ENCODE measurements at regions of chr15 and their contacts with region 1.

Region 1: DNA sequence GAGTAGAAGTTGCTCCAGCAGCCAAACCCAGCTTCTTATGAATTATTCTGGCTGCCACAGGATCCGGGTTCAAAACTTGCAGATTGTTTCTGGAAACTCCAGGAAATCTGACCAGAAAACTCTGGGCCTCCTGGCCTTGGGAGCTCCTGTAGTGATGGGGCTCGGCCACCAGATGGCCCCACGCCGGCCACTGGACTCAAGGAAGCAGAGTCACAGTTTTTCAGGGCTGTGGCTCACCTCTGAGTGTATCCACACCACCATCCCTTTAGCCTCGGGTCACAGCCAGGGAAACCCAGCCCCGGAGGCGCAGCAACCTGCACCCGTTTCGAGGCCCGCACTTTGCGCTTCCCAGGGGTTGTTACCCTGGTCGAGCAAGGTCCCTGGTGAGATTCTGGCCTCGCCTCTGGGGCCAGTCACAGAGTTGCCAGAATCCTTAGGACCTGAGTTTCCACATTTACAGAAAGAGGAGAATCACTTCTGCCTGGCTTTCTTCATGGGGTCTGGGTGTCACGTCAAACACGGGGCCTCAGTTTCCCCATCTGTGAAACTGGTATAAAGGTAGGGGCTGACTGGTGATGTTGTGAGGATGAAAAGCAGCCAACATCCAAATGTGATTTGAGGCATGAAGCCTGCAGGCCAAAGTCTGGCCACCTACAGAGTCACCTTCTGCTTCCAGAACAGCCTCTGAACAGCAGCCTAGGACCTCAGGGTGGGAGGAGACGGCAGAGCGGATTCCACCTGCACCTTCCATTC is 53.5 kb upstream of the LCTL start:
- DNase-seq: peak; percentile 43 to 54 (median 51)
- H3K4me3 ChIP-seq: no peak overlapping the region
- H3K27ac ChIP-seq: no peak overlapping the region
- H3K4me1 ChIP-seq: peaks cover 17 to 85% (median 64%) of the 10 kb centered on the region in 4 experiments
- H3K27me3 ChIP-seq: peaks cover 0 to 3% (median 0%) of the 10 kb centered on the region in 5 experiments

Region 2: DNA sequence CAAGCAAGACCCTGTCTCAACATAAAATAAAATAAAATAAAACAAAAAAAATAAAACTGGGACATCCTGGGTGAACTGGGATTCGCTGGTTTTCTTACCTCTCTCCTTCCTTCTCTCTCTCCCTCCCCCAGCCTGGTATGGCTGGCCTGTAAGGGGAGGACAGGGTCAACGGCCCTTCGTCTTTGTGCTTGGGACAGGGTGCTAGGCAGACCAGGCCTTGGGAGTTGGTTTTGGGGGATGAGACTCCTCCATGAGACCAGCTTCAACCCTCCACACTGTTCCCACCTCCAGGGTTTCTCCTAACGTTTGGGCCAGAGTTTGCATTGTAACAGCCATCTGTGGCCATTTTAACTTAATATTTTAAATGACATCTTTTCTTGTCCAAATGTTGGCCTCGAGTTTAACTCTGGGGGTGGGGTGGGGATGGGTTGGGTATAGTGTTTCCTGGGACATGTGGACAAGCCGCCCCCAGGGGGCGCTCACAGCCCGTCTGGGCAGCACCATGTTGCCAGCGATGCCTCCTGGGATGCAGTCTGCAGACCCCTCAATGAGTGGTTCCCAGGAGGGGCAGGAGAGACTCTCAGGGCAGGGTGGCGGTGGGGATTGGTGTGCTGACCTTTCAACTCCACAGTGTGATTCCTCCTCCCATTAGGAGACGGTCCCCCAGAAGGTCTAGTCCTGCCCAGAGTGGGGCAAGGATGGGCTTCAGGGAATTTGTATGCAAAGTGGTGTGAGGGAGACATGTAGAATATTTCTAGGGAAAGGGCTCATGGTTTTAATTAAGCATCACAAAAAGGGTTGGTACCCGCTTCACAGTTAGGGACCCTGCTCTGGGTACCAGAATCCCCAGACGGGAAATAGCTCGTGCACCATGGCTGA is 15.8 kb before region 1 on chr15:
- CTCF ChIA-PET with region 1: interaction called, 21 read pairs
- POLR2A ChIA-PET with region 1: no interaction called
- DNase-seq: peak; percentile 76 to 87 (median 77)
- H3K4me3 ChIP-seq: no peak overlapping the region
- H3K27ac ChIP-seq: no peak overlapping the region
- H3K4me1 ChIP-seq: peaks cover 0 to 14% (median 0%) of the 10 kb centered on the region in 4 experiments
- H3K27me3 ChIP-seq: no peaks in the 10 kb centered on the region

Region 3: GRCh38 chr15:66638377-66638776 is 19.1 kb after region 1 on chr15:
- CTCF ChIA-PET with region 1: interaction called, 15 read pairs
- POLR2A ChIA-PET with region 1: no interaction called
- DNase-seq: peak in 2 of 3 donors; percentile 39 to 51
- H3K4me3 ChIP-seq: no peak overlapping the region
- H3K27ac ChIP-seq: no peak overlapping the region
- H3K4me1 ChIP-seq: peaks cover 2 to 41% (median 6%) of the 10 kb centered on the region in 4 experiments
- H3K27me3 ChIP-seq: peaks cover 0 to 2% (median 0%) of the 10 kb centered on the region in 5 experiments

Region 4: GRCh38 chr15:66700802-66701421 is 81.6 kb after region 1 on chr15:
- CTCF ChIA-PET with region 1: interaction called, 153 read pairs
- POLR2A ChIA-PET with region 1: interaction called, 4 read pairs
- DNase-seq: peak; percentile 85 to 92 (median 86)
- H3K4me3 ChIP-seq: peak overlapping the region; percentile 51 to 85 (median 68)
- H3K27ac ChIP-seq: peak overlapping the region in 1 of 2 experiments; percentile 61
- H3K4me1 ChIP-seq: peaks cover 4 to 43% (median 35%) of the 10 kb centered on the region in 4 experiments
- H3K27me3 ChIP-seq: peaks cover 0 to 34% (median 5%) of the 10 kb centered on the region in 5 experiments

Measured in common myeloid progenitor, CD34-positive (primary cell).